CD8-positive, alpha-beta T cell (primary cell): ENCODE measurements at regions of chr6 and their contacts with region 1.

Region 1: GRCh38 chr6:38713812-38714211 is 1.3 kb upstream of the DNAH8 start:
- DNase-seq: peak in 8 of 9 experiments; percentile 26 to 76 (median 58)
- ATAC-seq: peak; percentile 83
- H3K4me3 ChIP-seq: no peak overlapping the region
- H3K4me3 Mint-ChIP-seq: no peak overlapping the region
- H3K27ac ChIP-seq: peak overlapping the region in 1 of 2 experiments; percentile 66
- H3K27ac Mint-ChIP-seq: peak overlapping the region; percentile 74
- H3K4me1 ChIP-seq: peaks cover 20% of the 10 kb centered on the region
- H3K4me1 Mint-ChIP-seq: peaks cover 19% of the 10 kb centered on the region
- H3K27me3 ChIP-seq: peaks cover 0 to 2% of the 10 kb centered on the region in 2 experiments
- H3K27me3 Mint-ChIP-seq: peaks cover 22% of the 10 kb centered on the region
- CTCF ChIP-seq: no peak

Region 2: GRCh38 chr6:38068854-38069590 is 644.8 kb before region 1 on chr6:
- CTCF ChIA-PET with region 1: no interaction called
- POLR2A ChIA-PET with region 1: no interaction called
- intact Hi-C with region 1: no loop called
- DNase-seq: no peak
- ATAC-seq: no peak
- H3K4me3 ChIP-seq: no peak overlapping the region
- H3K4me3 Mint-ChIP-seq: no peak overlapping the region
- H3K27ac ChIP-seq: no peak overlapping the region
- H3K27ac Mint-ChIP-seq: no peak overlapping the region
- H3K4me1 ChIP-seq: no peaks in the 10 kb centered on the region
- H3K4me1 Mint-ChIP-seq: peaks cover 22% of the 10 kb centered on the region
- H3K27me3 ChIP-seq: no peaks in the 10 kb centered on the region
- H3K27me3 Mint-ChIP-seq: no peaks in the 10 kb centered on the region
- CTCF ChIP-seq: no peak

Region 3: DNA sequence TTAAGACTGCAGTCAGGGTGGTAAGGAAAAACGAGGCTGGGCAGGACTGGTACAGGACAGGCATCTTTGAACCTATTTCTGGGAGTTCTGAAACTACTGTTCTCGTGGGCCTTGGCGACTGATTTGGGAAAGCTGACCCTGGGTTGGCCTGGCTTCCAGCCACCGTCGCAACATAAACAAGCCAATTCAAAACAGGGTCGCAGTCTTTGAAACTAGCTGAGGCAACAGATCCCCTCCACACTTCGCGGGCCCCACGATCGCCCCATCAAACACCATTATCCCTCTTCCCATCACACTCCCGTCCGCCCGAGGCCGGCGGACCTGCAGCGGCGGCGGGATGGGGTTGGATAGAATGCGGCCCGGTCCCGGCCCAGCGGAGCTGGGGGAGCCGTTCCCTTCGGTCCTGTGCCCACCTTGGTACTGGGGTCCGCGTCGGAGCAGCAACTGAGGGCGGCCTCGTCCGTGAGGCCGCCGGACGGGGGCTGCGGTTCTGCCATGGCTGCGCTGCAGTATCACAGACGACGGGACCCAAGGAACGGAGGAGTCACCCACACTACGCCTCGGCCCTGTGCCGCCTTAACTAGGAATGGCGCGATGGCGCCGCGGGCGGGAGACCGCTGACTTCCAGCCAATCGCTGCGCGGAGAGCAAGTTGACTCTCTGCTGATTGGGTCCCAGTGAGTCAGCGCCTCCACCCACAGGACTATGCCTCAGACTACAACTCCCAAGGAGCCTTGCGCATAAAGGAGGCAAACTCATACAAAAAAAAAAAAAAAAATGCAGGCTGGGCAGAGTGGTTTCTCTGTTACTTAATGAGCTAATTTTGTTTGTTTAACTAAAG is 11.0 kb before region 1 on chr6 and contains the start of gene GLO1:
- CTCF ChIA-PET with region 1: interaction called, 3 read pairs
- POLR2A ChIA-PET with region 1: interaction called, 24 read pairs
- intact Hi-C with region 1: no loop called
- DNase-seq: peak; percentile 91 to 98 (median 96)
- ATAC-seq: peak; percentile 99
- H3K4me3 ChIP-seq: peak within 1 kb of the TSS; percentile 64 to 88
- H3K4me3 Mint-ChIP-seq: peak within 1 kb of the TSS; percentile 83
- H3K27ac ChIP-seq: peak within 1 kb of the TSS; percentile 78 to 90
- H3K27ac Mint-ChIP-seq: peak within 1 kb of the TSS; percentile 92
- H3K4me1 ChIP-seq: no peaks in the 10 kb centered on the region
- H3K4me1 Mint-ChIP-seq: peaks cover 24% of the 10 kb centered on the region
- H3K27me3 ChIP-seq: no peaks in the 10 kb centered on the region
- H3K27me3 Mint-ChIP-seq: peaks cover 6% of the 10 kb centered on the region
- CTCF ChIP-seq: no peak
- total RNA-seq, gene GLO1: 23.1 to 23.9 TPM